CD4-positive, alpha-beta T cell (primary cell): ENCODE measurements at regions of chr6 and their contacts with region 1.

Region 1: DNA sequence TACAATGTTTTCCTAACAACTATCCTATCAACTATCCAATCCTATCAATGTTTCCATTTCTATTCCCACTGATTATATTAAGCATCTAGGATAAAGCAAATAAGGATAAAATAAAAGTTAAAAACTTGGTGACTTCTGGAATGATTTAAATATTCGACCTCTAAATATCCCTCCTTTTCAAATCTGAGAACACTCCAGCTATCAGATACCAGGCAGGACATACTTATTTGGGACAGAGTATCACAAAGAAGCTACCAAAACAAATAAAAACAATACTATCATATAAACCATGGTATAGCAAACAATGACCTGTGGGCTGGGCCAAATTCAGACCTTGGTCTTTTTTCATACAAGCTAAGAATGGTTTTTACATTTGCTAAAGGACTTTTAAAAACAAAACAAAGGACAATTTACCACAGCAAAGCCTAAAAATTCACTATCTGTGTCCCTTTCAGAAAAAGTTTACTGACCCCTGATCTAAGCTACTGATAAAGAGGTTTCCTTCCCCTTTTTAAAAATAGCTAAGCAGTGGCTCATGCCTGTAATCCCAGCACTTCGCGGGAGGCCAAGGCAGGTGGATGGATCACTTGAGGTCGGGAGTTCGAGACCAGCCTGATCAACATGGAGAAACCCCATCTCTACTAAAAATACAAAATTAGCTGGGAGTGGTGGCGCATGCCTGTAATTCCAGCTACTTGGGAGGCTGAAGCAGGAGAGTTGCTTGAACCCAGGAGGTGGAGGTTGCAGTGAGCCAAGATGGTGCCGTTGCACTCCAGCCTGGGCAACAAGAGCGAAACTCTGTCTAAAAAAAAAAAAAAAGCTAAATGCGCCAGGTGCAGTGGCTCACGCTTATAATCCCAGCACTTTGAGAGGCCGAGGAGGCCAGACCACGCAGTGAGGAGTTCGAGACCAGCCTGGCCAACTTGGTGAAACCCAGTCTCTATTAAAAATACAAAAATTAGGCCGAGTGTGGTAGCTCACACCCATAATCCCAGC is 6.0 kb downstream of the NUP153 start:
- DNase-seq: no peak
- ATAC-seq: no peak
- H3K4me3 ChIP-seq: no peak overlapping the region
- H3K4me3 Mint-ChIP-seq: peak overlapping the region; percentile 3
- H3K27ac ChIP-seq: no peak overlapping the region
- H3K27ac Mint-ChIP-seq: peak overlapping the region; percentile 56
- H3K4me1 ChIP-seq: peaks cover 53% of the 10 kb centered on the region
- H3K4me1 Mint-ChIP-seq: peaks cover 71% of the 10 kb centered on the region
- H3K27me3 ChIP-seq: no peaks in the 10 kb centered on the region
- H3K27me3 Mint-ChIP-seq: no peaks in the 10 kb centered on the region
- CTCF ChIP-seq: no peak

Region 2: DNA sequence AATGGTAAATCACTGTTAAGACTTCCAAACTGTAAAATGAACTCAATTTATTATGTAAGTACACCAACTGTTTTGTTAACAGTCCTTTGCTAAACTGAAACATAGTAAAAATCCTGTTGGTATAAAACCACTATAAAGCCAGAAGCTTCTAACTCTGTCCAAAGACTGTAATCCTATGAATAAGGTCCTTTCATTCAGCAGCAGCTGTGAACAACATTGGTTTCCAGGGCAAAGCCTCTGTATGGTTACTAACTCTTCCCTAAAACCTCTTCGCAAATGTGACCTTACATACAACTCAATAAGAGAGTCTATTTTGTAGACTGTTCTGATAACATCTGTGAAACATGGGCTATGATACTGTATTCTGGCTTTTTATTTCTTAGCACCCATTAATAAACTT is 34.1 kb before region 1 on chr6:
- CTCF ChIA-PET with region 1: no interaction called
- POLR2A ChIA-PET with region 1: interaction called, 4 read pairs
- intact Hi-C with region 1: loop called (anchors 5 kb)
- DNase-seq: no peak
- ATAC-seq: no peak
- H3K4me3 ChIP-seq: no peak overlapping the region
- H3K4me3 Mint-ChIP-seq: no peak overlapping the region
- H3K27ac ChIP-seq: no peak overlapping the region
- H3K27ac Mint-ChIP-seq: no peak overlapping the region
- H3K4me1 ChIP-seq: peaks cover 4% of the 10 kb centered on the region
- H3K4me1 Mint-ChIP-seq: peaks cover 36% of the 10 kb centered on the region
- H3K27me3 ChIP-seq: no peaks in the 10 kb centered on the region
- H3K27me3 Mint-ChIP-seq: no peaks in the 10 kb centered on the region
- CTCF ChIP-seq: no peak

Region 3: DNA sequence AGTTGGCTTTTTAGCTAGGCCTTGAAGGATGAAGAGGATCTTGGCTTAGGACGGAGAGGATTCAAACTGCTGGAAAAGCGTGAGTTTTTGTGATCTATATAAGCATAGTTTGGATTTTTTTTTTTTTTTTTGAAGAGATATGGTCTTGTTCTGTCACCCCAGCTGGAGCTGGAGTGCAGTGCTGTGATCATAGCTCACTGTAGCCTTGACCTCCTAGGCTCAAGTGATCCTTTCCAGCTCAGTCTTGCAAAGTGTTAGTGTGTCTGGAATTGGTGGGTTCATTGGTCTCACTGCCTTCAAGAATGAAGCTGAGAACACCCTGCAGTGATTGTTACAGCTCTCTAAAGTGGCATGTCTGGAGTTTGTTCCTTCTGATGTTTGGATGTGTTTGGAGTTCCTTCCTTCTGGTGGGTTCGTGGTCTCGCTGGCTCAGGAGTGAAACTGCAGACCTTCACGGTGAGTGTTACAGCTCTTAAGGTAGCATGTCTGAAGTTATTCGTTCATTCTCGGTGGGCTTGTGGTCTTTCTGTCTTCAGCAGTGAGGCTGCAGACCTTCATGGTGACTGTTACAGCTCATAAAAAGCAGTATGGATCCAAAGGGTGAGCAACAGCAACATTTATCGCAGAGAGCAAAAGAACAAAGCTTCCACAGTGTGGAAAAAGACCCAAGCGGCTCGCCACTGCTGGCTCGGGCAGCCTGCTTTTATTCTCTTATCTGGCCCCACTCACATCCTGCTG is 43.5 kb after region 1 on chr6:
- CTCF ChIA-PET with region 1: no interaction called
- POLR2A ChIA-PET with region 1: no interaction called
- intact Hi-C with region 1: no loop called
- DNase-seq: no peak
- ATAC-seq: no peak
- H3K4me3 ChIP-seq: no peak overlapping the region
- H3K4me3 Mint-ChIP-seq: no peak overlapping the region
- H3K27ac ChIP-seq: no peak overlapping the region
- H3K27ac Mint-ChIP-seq: no peak overlapping the region
- H3K4me1 ChIP-seq: no peaks in the 10 kb centered on the region
- H3K4me1 Mint-ChIP-seq: peaks cover 3% of the 10 kb centered on the region
- H3K27me3 ChIP-seq: peaks cover 0 to 4% of the 10 kb centered on the region in 2 experiments
- H3K27me3 Mint-ChIP-seq: peaks cover 7% of the 10 kb centered on the region
- CTCF ChIP-seq: no peak

Region 4: DNA sequence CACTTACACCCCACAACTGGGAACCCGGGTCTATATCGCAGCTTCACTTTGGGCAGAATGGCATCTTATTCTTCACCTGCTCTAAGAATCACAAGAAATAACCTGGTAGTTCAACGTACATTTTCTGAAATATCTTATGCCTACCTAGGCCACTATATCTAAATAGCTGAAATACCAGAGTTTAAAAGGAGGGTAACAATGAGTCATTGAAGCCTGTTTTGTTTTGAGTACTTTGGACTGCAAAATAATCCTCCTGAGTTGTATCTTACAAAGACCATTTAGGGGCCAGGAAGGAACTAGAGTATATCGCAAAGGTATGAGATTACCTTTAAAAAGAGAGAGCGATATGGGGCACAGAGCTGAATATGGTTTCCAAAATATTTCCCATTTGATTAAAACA is 102.7 kb after region 1 on chr6:
- CTCF ChIA-PET with region 1: interaction called, 3 read pairs
- POLR2A ChIA-PET with region 1: no interaction called
- intact Hi-C with region 1: loop called (anchors 5 kb)
- DNase-seq: no peak
- ATAC-seq: no peak
- H3K4me3 ChIP-seq: no peak overlapping the region
- H3K4me3 Mint-ChIP-seq: no peak overlapping the region
- H3K27ac ChIP-seq: no peak overlapping the region
- H3K27ac Mint-ChIP-seq: no peak overlapping the region
- H3K4me1 ChIP-seq: no peaks in the 10 kb centered on the region
- H3K4me1 Mint-ChIP-seq: no peaks in the 10 kb centered on the region
- H3K27me3 ChIP-seq: no peaks in the 10 kb centered on the region
- H3K27me3 Mint-ChIP-seq: peaks cover 17% of the 10 kb centered on the region
- CTCF ChIP-seq: no peak